CD14-positive monocyte (primary cell): ENCODE measurements at regions of chr12 and their contacts with region 1.

Region 1: GRCh38 chr12:32755654-32756475 is at the start of gene YARS2:
- DNase-seq: peak; percentile 85 to 92 (median 92)
- H3K4me3 ChIP-seq: peak within 1 kb of the TSS; percentile 68 to 97 (median 96)
- H3K4me3 Mint-ChIP-seq: peak within 1 kb of the TSS; percentile 93 to 94
- H3K27ac ChIP-seq: peak within 1 kb of the TSS; percentile 73 to 89
- H3K27ac Mint-ChIP-seq: peak within 1 kb of the TSS; percentile 83 to 93 (median 89)
- H3K4me1 ChIP-seq: peaks cover 12 to 22% of the 10 kb centered on the region in 2 donors
- H3K4me1 Mint-ChIP-seq: peaks cover 13% of the 10 kb centered on the region
- H3K27me3 ChIP-seq: no peaks in the 10 kb centered on the region
- H3K27me3 Mint-ChIP-seq: peaks cover 0 to 1% (median 0%) of the 10 kb centered on the region in 3 donors
- CTCF ChIP-seq: peak; percentile 78
- polyA plus RNA-seq, gene YARS2: 4.5 to 7.5 (median 6.6) TPM

Region 2: DNA sequence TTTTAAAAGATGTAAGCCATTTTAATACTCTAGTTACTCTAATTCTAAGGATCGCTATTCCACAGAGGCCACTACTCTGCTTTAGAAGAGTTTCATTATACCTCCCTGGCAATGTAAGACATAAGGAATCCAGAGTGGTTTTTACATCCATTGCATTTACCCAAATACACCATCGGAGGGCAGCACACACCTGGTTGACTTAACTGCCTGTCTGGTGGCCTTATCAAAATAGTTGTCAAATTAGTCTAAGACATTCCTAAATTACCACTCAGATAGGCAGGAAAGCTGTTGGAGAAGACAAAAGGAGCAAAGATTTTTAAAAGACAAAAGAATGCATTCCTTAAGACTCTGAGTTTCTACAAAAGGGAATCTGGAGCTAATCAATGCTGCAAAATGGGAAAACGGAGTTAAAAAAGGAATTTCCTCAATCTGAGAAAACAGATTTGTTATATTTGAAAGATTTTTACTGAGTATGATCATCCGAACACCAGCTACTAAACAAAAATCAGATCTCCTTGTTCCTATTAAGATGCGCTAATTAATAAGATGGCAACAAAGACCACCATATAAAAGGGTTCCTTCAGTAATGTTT is 390.3 kb before region 1 on chr12:
- intact Hi-C with region 1: loop called in 1 of 2 experiments (anchors 10 kb)
- DNase-seq: peak; percentile 57 to 69 (median 65)
- H3K4me3 ChIP-seq: no peak overlapping the region
- H3K4me3 Mint-ChIP-seq: no peak overlapping the region
- H3K27ac ChIP-seq: no peak overlapping the region
- H3K27ac Mint-ChIP-seq: no peak overlapping the region
- H3K4me1 ChIP-seq: no peaks in the 10 kb centered on the region
- H3K4me1 Mint-ChIP-seq: no peaks in the 10 kb centered on the region
- H3K27me3 ChIP-seq: no peaks in the 10 kb centered on the region
- H3K27me3 Mint-ChIP-seq: peaks cover 0 to 2% (median 0%) of the 10 kb centered on the region in 3 donors
- CTCF ChIP-seq: peak; percentile 93

Region 3: DNA sequence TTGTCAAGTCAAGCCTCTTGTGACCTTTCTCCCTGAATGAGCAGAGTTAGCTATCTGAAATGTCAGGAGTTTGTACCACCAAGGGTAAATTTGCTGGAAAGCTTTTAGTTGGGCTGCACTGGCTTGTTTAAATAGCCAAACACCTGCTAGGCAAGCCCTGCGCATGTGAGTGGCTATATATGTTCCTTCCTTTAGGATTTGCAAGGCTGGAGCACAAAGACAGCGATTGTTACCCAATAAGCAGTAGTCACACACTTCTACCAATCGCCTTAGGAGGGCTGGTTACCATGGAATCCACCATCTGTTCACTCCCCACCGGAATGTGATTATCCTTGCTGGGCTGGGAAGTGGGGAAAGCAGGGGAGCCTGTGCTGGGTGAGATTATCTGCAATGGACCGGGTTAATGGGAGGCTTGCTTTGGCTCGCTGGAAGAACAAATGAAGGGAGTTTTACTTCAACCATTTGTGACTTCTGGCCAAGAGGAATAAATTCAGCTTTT is 254.0 kb before region 1 on chr12:
- intact Hi-C with region 1: no loop called
- DNase-seq: no peak
- H3K4me3 ChIP-seq: no peak overlapping the region
- H3K4me3 Mint-ChIP-seq: no peak overlapping the region
- H3K27ac ChIP-seq: peak overlapping the region; percentile 26 to 60
- H3K27ac Mint-ChIP-seq: peak overlapping the region; percentile 4 to 85 (median 68)
- H3K4me1 ChIP-seq: peaks cover 46 to 54% of the 10 kb centered on the region in 2 donors
- H3K4me1 Mint-ChIP-seq: peaks cover 68% of the 10 kb centered on the region
- H3K27me3 ChIP-seq: no peaks in the 10 kb centered on the region
- H3K27me3 Mint-ChIP-seq: no peaks in the 10 kb centered on the region
- CTCF ChIP-seq: no peak

Region 4: DNA sequence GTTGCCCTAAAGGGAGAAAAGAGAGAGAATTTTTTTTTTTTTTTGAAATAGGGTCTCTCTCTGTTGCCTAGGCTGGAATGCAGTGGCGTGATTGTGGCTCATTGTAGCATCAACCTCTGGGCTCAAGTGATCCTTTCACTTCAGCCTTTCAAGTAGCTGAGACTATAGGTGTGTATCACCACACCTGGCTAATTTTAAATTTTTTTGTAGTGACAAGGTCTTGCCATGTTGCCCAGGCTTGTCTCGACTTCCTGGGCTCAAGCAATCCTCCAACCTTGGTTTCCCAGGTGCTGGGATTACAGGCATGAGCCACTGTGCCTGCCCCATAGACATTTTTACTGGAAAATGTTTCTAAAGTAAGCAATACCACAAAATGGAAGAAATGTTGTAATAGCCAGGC is 36.9 kb before region 1 on chr12:
- intact Hi-C with region 1: no loop called
- DNase-seq: no peak
- H3K4me3 ChIP-seq: no peak overlapping the region
- H3K4me3 Mint-ChIP-seq: no peak overlapping the region
- H3K27ac ChIP-seq: no peak overlapping the region
- H3K27ac Mint-ChIP-seq: no peak overlapping the region
- H3K4me1 ChIP-seq: no peaks in the 10 kb centered on the region
- H3K4me1 Mint-ChIP-seq: no peaks in the 10 kb centered on the region
- H3K27me3 ChIP-seq: no peaks in the 10 kb centered on the region
- H3K27me3 Mint-ChIP-seq: no peaks in the 10 kb centered on the region
- CTCF ChIP-seq: no peak

Region 5: GRCh38 chr12:34022079-34022830 is 1266.4 kb after region 1 on chr12 and contains the start of gene ALG10:
- intact Hi-C with region 1: loop called (anchors 2 kb)
- DNase-seq: peak; percentile 96 to 97 (median 96)
- H3K4me3 ChIP-seq: peak within 1 kb of the TSS; percentile 53 to 86 (median 67)
- H3K4me3 Mint-ChIP-seq: peak within 1 kb of the TSS; percentile 91 to 97
- H3K27ac ChIP-seq: peak within 1 kb of the TSS; percentile 75 to 88
- H3K27ac Mint-ChIP-seq: peak within 1 kb of the TSS; percentile 92 to 96 (median 95)
- H3K4me1 ChIP-seq: peaks cover 11 to 18% of the 10 kb centered on the region in 2 donors
- H3K4me1 Mint-ChIP-seq: peaks cover 24% of the 10 kb centered on the region
- H3K27me3 ChIP-seq: no peaks in the 10 kb centered on the region
- H3K27me3 Mint-ChIP-seq: peaks cover 0 to 2% (median 0%) of the 10 kb centered on the region in 3 donors
- CTCF ChIP-seq: peak; percentile 78
- polyA plus RNA-seq, gene ALG10: 1.5 to 2.0 (median 1.6) TPM